OCI-LY7 (cell line): ENCODE measurements at regions of chr2 and their contacts with region 1.

Region 1: DNA sequence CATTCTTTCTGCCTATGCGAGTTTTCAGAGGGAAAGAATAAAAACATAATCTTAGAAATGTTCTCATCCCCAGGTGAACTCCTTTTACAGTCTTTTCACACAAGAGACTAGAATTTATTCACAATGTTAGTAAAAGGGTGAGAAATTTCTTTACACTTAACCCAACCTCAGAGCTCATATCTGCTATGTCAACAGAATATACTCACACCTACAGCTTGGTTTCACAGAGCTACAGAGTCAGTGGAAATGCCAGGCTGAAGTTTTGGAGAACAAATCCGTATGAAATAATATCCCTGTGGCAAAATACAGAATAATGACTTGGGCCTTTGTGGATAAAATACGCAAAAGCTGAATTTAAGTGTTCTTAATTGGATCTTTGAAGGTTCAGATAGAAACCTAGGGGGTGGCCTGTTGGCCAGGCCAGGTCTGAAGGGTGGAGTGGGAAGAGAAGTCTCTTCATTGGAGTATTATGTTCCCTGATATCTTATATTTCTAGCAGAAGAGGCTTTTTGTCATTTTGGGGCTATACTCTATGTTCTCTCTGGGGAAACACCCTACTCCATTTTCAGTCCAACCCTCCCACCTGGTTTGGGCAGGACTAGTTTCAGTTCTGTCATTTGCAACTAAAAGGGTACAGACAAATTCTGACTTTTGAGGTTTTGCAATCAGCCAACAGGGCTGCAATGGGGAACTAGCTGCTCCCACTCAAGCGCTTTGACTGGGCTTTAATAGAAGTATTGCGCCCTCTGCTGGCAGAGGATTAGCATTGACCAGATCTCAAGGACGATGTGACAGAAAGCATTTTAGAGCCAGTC is 25.7 kb downstream of the FBXO48 start:
- DNase-seq: peak; percentile 99
- H3K4me3 ChIP-seq: peak overlapping the region; percentile 40
- H3K27ac ChIP-seq: peak overlapping the region; percentile 74
- H3K4me1 ChIP-seq: peaks cover 50% of the 10 kb centered on the region
- CTCF ChIP-seq: peak; percentile 98

Region 2: DNA sequence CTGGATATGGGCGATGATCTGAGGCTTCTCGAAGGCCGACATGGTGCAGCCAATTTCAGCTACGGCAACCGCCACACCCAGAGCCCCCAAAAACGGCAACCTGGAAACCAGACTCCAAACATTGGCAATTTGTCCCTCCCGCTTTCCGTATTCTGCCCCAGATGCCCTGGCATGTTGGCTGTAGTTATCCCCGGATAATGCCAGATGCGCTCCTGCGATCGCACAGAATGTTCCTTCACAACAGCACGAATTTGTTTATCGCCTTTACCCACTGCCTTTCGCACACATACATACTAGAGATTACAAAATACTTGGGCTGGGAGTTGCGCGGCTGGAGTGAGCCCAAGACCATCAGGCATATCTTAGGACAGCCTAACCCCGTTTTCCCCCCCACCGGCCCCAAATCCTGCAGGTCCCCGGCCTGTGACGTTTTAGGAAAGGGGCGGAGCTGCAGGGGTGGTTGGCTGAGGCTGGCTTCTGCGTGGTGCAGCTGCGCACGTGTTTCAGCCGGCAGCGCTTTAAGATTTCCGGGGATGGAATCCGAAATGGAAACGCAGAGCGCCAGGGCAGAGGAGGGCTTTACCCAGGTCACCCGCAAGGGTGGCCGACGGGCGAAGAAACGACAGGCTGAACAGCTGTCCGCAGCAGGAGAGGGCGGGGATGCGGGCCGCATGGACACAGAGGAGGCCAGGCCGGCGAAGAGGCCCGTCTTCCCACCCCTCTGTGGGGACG is 283.8 kb before region 1 on chr2 and contains the start of gene PNO1:
- CTCF ChIA-PET with region 1: no interaction called
- POLR2A ChIA-PET with region 1: no interaction called
- intact Hi-C with region 1: loop called (anchors 10 kb)
- DNase-seq: peak; percentile 96
- H3K4me3 ChIP-seq: peak within 1 kb of the TSS; percentile 100
- H3K27ac ChIP-seq: peak within 1 kb of the TSS; percentile 76
- H3K4me1 ChIP-seq: peaks cover 28% of the 10 kb centered on the region
- CTCF ChIP-seq: no peak
- total RNA-seq, gene PNO1: 18.6 and 26.3 TPM in 2 replicates

Region 3: DNA sequence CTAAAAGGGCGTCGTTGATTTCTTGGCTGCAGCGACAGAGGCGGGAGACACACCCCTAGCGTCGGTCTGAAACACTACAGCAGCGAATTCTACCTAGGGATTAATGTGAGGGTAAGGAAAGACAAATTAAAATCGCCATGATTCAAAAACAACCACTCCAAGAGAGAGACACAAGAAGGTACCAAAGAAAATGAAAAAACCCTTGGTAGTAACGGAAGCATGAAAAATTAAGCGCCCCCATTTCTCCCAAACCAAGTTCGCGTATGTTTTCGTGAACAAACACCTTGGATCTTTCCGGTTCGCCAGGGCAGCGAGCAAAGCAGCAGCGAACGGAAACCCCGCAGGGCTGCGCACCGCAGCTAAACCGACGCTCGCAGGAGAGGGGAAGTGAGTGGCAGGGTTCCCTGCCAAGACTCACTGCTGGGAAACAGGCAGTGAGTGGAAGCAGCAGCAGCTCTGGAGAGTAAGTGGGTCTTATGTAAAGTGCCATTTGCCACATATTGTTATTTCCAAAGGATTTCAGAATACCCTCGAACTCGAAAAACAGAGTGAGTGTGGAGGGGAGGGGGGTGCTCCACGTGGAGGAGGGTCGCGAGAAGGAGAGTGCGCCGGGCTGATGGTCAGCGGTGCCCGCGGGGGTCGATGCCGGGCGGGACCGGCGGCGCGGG is 190.1 kb before region 1 on chr2:
- CTCF ChIA-PET with region 1: no interaction called
- POLR2A ChIA-PET with region 1: interaction called, 4 read pairs
- intact Hi-C with region 1: loop called (anchors 2 kb)
- DNase-seq: peak; percentile 92
- H3K4me3 ChIP-seq: peak overlapping the region; percentile 89
- H3K27ac ChIP-seq: peak overlapping the region; percentile 89
- H3K4me1 ChIP-seq: peaks cover 63% of the 10 kb centered on the region
- CTCF ChIP-seq: peak; percentile 88

Region 4: GRCh38 chr2:68362069-68362468 is 79.3 kb before region 1 on chr2:
- CTCF ChIA-PET with region 1: interaction called, 3 read pairs
- POLR2A ChIA-PET with region 1: interaction called, 22 read pairs
- intact Hi-C with region 1: loop called (anchors 1 kb)
- DNase-seq: peak; percentile 94
- H3K4me3 ChIP-seq: peak overlapping the region; percentile 49
- H3K27ac ChIP-seq: peak overlapping the region; percentile 72
- H3K4me1 ChIP-seq: peaks cover 57% of the 10 kb centered on the region
- CTCF ChIP-seq: peak; percentile 92

Region 5: DNA sequence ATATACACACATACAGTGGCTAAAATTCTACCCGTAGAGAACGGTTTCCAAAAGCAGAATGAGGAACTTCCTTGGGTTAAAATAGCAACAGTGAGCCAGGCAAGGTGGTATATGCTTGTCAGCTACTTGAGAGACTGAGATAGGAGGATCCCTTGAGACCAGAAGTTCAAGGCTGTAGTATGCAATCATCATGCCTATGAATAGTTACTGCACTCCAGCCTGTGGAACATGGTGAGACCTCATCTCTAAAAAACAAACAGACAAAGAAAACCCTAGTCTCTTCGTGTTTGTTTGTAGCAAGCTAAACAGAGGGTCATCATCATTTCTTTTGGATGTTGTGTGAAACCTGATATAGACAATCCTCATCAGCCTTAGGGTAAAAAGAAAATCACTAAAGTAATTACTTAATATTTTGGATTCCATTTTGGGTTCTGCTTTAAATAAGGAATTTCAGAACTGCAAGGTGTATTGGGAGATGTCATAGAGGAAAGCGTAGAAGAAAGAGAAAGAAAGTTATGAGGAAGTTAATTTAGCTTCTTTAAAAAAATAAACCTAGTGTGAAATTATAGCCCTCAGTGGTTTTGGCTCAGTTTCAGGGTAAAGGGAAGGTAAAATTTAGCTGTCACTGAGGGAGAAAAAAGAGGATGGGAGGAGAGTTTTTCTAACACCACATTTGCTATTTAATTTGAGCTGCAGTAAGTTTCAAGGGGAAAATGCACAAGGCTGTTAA is 29.8 kb before region 1 on chr2:
- CTCF ChIA-PET with region 1: interaction called, 3 read pairs
- POLR2A ChIA-PET with region 1: interaction called, 21 read pairs
- intact Hi-C with region 1: loop called (anchors 1 kb)
- DNase-seq: peak; percentile 91
- H3K4me3 ChIP-seq: peak overlapping the region; percentile 47
- H3K27ac ChIP-seq: peak overlapping the region; percentile 92
- H3K4me1 ChIP-seq: peaks cover 57% of the 10 kb centered on the region
- CTCF ChIP-seq: no peak

Region 6: GRCh38 chr2:68423966-68424650 is 17.3 kb before region 1 on chr2:
- CTCF ChIA-PET with region 1: interaction called, 5 read pairs
- POLR2A ChIA-PET with region 1: interaction called, 39 read pairs
- intact Hi-C with region 1: no loop called
- DNase-seq: peak; percentile 81
- H3K4me3 ChIP-seq: peak overlapping the region; percentile 39
- H3K27ac ChIP-seq: peak overlapping the region; percentile 88
- H3K4me1 ChIP-seq: peaks cover 90% of the 10 kb centered on the region
- CTCF ChIP-seq: no peak